CD14-positive monocyte (primary cell): ENCODE measurements at regions of chr7 and their contacts with region 1.

Region 1: GRCh38 chr7:73726083-73726466 is 6.6 kb upstream of the STX1A start:
- DNase-seq: no peak
- H3K4me3 ChIP-seq: no peak overlapping the region
- H3K4me3 Mint-ChIP-seq: no peak overlapping the region
- H3K27ac ChIP-seq: no peak overlapping the region
- H3K27ac Mint-ChIP-seq: no peak overlapping the region
- H3K4me1 ChIP-seq: no peaks in the 10 kb centered on the region
- H3K4me1 Mint-ChIP-seq: peaks cover 7% of the 10 kb centered on the region
- H3K27me3 ChIP-seq: peaks cover 13 to 65% of the 10 kb centered on the region in 2 donors
- H3K27me3 Mint-ChIP-seq: peaks cover 53 to 66% (median 58%) of the 10 kb centered on the region in 3 donors
- CTCF ChIP-seq: peak; percentile 3

Region 2: DNA sequence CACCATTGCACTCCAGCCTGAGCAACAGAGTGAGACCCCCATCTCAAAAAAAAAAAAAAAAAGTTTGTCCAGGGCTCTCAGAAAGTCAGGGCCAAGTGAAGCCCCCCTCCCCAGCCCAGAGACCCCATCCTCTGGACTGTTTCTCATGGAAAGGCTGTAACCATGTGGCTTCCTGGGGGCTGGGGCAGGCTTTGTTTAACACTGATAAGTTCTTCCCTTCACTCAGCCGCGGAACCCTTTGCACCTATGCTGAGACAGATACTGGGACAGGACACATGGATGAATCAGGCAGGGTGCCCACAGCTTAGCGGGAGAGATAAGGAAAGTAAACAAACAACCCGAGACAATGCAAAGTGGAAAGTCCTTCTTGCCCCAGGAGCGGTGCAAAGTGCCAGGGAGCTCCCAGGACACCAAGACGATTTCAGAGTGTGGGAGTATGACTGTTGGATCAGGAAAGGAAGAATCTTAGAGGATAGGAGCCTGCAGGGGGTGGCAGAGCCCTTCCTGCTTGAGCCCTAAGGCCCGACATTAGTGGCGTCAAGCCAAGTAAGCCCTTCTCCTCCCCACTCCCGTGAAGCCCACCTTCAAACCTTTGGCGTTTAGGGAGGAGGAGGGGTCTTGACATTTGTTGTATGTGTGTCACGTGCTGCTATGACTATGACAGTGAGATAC is 113.3 kb before region 1 on chr7:
- intact Hi-C with region 1: loop called (anchors 5 kb)
- DNase-seq: no peak
- H3K4me3 ChIP-seq: no peak overlapping the region
- H3K4me3 Mint-ChIP-seq: peak overlapping the region in 1 of 2 donors; percentile 50
- H3K27ac ChIP-seq: no peak overlapping the region
- H3K27ac Mint-ChIP-seq: no peak overlapping the region
- H3K4me1 ChIP-seq: no peaks in the 10 kb centered on the region
- H3K4me1 Mint-ChIP-seq: peaks cover 5% of the 10 kb centered on the region
- H3K27me3 ChIP-seq: peaks cover 11 to 50% of the 10 kb centered on the region in 2 donors
- H3K27me3 Mint-ChIP-seq: peaks cover 56 to 95% (median 84%) of the 10 kb centered on the region in 3 donors
- CTCF ChIP-seq: no peak

Region 3: GRCh38 chr7:73635428-73636200 is 90.5 kb before region 1 on chr7:
- intact Hi-C with region 1: no loop called
- DNase-seq: no peak
- H3K4me3 ChIP-seq: no peak overlapping the region
- H3K4me3 Mint-ChIP-seq: peak overlapping the region; percentile 17 to 70
- H3K27ac ChIP-seq: no peak overlapping the region
- H3K27ac Mint-ChIP-seq: peak overlapping the region in 3 of 7 donors; percentile 37 to 81 (median 78)
- H3K4me1 ChIP-seq: peaks cover 11 to 20% of the 10 kb centered on the region in 2 donors
- H3K4me1 Mint-ChIP-seq: peaks cover 19% of the 10 kb centered on the region
- H3K27me3 ChIP-seq: peaks cover 0 to 18% of the 10 kb centered on the region in 2 donors
- H3K27me3 Mint-ChIP-seq: peaks cover 21 to 49% (median 40%) of the 10 kb centered on the region in 3 donors
- CTCF ChIP-seq: no peak